ENCODE measurements at regions of chr11 and their contacts with region 1.

Region 1: GRCh38 chr11:78416305-78417178 is 1.1 kb downstream of the GAB2 start:
- DNase-seq: peak; percentile 90
- ATAC-seq: peak; percentile 68

Region 2: DNA sequence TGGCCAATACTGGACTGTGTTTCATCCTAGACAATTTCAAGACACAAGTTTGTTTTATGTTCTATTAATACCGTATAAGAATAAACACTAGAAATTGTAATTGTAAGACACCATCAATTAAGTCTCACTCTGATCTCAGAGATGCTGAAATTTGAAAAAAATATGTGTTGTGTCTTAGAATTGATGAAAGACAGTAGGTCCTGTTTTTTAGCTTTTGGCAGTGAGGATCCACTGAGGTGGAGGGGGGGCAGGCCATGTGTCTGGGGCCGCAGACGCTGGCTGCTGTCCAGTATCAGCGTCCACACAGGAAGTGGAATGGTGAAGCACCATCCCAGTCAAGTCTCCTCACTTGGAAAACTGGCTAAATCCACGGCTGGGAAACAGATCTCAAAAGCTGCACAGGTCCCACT is 254.6 kb before region 1 on chr11:
- intact Hi-C with region 1: loop called (anchors 5 kb)
- DNase-seq: peak; percentile 56
- ATAC-seq: peak; percentile 30

Region 3: DNA sequence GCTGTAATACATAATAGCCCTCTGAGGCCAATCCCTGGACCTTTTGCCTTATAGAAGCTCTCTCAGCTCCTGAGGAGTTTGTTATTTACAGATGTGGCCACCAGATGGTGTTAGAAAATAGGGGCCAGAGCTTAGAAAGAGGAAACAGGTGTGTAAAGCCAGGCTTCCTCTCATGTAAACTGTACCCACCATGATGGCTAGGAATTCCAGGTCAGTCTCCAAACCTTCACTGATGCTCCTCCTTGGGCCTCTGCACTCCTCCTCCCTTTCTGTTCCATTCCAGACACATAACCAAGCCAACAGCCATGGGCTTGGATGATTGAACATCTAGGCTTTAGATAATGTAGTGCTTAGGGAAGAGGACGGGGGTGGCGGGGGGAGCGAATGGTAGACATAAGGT is 188.1 kb before region 1 on chr11:
- intact Hi-C with region 1: loop called (anchors 5 kb)
- DNase-seq: no peak
- ATAC-seq: peak; percentile 69

Region 4: DNA sequence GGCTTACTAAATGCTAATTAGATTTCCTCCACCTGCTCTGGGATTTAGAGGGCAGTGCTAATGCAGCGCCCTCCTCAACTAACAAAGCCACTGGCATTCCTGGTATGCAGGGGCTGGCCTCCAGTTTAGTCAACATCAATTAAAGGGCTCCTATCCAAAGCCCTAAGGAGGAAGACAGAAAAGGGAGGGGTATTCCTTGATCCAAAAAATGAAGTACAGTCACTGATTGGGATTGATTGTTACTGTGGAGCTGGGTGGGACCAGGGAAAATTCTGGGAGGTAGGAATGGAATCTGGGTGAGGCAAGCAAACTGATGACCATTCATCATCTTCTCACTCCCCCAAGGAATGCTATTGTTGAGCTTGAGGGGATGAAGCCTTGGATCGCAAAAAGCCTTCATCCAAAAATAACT is 51.2 kb before region 1 on chr11:
- intact Hi-C with region 1: no loop called
- DNase-seq: no peak
- ATAC-seq: peak; percentile 57

Region 5: GRCh38 chr11:78564490-78565467 is 148.2 kb after region 1 on chr11:
- intact Hi-C with region 1: loop called (anchors 10 kb)
- DNase-seq: no peak
- ATAC-seq: peak; percentile 72